Panc1 (cell line): ENCODE measurements at regions of chr2 and their contacts with region 1.

Region 1: DNA sequence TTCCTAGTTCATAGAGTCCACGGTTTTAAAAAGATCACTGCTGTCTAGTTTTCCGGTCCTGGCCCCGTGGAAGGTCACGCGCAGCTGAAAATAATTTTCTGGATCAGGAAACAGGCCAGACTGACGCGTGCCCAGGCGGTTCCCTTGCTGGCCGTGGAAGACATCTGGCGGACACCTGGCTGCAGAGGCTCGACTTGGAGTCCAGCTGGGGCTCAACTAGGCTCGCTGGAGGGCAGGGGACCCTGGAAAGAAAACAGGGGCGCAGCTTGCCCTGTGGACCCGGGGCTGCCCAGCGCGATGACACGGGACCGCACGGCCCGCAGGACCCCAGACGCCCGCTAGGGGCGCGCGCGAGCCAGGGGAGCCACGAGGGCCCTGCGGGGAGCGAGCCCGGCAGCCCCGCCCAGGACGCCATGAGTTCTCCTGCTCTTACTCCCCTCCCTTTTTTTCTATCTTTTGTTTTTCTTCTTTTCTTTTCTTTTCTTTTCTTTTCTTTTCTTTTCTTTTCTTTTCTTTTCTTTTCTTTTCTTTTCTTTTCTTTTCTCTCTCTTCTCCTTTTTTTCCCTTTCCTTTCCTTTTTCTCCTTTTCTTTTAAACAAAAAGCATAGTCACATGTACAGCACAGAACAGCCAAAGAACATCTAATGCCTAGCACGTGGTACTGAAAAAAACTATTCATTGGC is 43.2 kb upstream of the UBE2F start:
- DNase-seq: peak; percentile 12
- ATAC-seq: peak; percentile 99
- H3K4me3 ChIP-seq: peak overlapping the region; percentile 24 to 48
- H3K27ac ChIP-seq: peak overlapping the region; percentile 74
- H3K4me1 ChIP-seq: 0 out of 2 replicates have a peak, but pooled peaks cover 4% of the 10 kb centered on the region
- H3K27me3 ChIP-seq: no peaks in the 10 kb centered on the region
- CTCF ChIP-seq: peak; percentile 100

Region 2: GRCh38 chr2:237895544-237896506 is 27.8 kb before region 1 on chr2:
- CTCF ChIA-PET with region 1: interaction called, 11 read pairs
- POLR2A ChIA-PET with region 1: no interaction called
- in situ Hi-C with region 1: no loop called
- intact Hi-C with region 1: no loop called
- DNase-seq: no peak
- ATAC-seq: peak; percentile 92
- H3K4me3 ChIP-seq: no peak overlapping the region
- H3K27ac ChIP-seq: peak overlapping the region; percentile 49
- H3K4me1 ChIP-seq: peaks cover 37% of the 10 kb centered on the region
- H3K27me3 ChIP-seq: no peaks in the 10 kb centered on the region
- CTCF ChIP-seq: no peak

Region 3: DNA sequence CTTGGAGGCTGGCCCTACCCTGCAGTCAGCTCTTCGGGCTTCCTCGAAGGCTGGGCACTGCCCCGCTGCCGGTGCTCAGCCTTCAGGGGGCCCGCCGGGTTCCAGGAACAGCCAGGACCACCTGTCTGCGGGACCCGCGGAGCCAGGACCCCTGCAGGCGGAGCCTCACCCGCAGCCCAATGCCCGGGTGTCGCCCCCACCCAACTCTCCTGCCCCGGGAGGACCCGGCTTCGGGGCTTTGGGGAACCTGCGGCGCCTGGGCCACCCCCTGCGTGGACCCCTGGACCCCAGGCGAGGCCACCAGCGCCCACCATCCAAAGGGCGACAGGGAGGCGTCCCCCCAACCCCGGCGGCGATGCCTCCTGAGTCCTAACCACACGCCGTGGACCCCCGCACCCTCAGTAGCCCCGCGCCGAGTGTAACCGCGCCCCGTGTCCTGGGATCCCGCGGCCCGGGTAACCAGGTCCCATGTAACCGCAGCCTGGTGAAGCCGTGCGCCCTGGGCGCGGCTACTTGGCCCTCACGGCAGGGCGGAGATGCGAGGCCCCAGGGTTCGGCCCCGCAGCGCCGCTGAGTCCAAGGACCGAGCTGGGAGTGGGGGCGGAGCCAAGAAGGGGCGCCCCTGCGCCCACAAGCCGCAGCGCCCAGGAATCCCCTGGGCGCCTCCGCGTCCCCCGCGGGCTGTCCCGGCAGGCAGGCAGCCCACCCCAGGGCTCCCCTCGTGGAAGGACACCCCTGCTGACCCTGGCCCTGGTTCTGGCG is 32.2 kb after region 1 on chr2:
- CTCF ChIA-PET with region 1: interaction called, 10 read pairs
- POLR2A ChIA-PET with region 1: no interaction called
- in situ Hi-C with region 1: no loop called
- intact Hi-C with region 1: no loop called
- DNase-seq: no peak
- ATAC-seq: 0 out of 2 replicates have a peak, but pooled peaks have one; percentile 57
- H3K4me3 ChIP-seq: no peak overlapping the region
- H3K27ac ChIP-seq: no peak overlapping the region
- H3K4me1 ChIP-seq: no peaks in the 10 kb centered on the region
- H3K27me3 ChIP-seq: no peaks in the 10 kb centered on the region
- CTCF ChIP-seq: no peak

Region 4: GRCh38 chr2:238083919-238084318 is 160.3 kb after region 1 on chr2:
- CTCF ChIA-PET with region 1: interaction called, 13 read pairs
- POLR2A ChIA-PET with region 1: no interaction called
- in situ Hi-C with region 1: no loop called
- intact Hi-C with region 1: no loop called
- DNase-seq: no peak
- ATAC-seq: no peak
- H3K4me3 ChIP-seq: no peak overlapping the region
- H3K27ac ChIP-seq: no peak overlapping the region
- H3K4me1 ChIP-seq: no peaks in the 10 kb centered on the region
- H3K27me3 ChIP-seq: no peaks in the 10 kb centered on the region
- CTCF ChIP-seq: no peak